Heart right ventricle (tissue), 16 donors: ENCODE measurements at regions of chr5 and their contacts with region 1.

Region 1: DNA sequence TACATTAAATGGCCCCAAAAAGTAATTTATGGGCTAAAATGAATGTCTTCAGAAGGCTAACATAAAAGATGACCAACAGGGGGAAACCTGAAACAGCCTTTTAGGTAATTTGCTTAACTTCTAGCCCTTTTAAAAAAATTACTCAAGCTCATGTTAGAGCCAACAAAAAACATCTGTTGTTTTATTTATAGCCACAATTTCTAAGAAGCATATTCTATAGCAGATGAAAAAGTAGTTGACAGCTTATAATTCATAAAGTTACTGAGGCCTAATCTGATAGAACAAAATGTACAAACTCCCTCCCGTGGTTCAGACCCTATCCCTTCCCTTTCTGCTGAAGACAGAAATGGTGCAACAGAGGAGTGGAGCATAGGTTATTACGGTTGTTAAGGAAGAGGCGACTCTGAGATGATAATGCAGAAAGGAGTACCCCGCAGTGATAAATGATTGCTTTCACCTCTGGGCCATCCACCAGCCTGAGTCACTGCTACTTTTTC is 46.1 kb downstream of the PIK3R1 start:
- DNase-seq: no peak
- ATAC-seq: peak in 1 of 8 donors; percentile 23
- H3K4me3 ChIP-seq: no peak overlapping the region
- H3K27ac ChIP-seq: peak overlapping the region; percentile 18 to 86 (median 70)
- H3K4me1 ChIP-seq: peaks cover 32 to 96% (median 94%) of the 10 kb centered on the region in 9 donors
- H3K27me3 ChIP-seq: no peaks in the 10 kb centered on the region
- CTCF ChIP-seq: peak in 4 of 9 donors; percentile 23 to 43 (median 36)

Region 2: GRCh38 chr5:67493676-67494075 is 767.9 kb before region 1 on chr5:
- intact Hi-C with region 1: loop called in 5 of 10 experiments (anchors 10 kb)
- DNase-seq: peak; percentile 13 to 44
- ATAC-seq: peak; percentile 55 to 95 (median 91)
- H3K4me3 ChIP-seq: no peak overlapping the region
- H3K27ac ChIP-seq: no peak overlapping the region
- H3K4me1 ChIP-seq: peaks cover 0 to 13% (median 0%) of the 10 kb centered on the region in 9 donors
- H3K27me3 ChIP-seq: no peaks in the 10 kb centered on the region
- CTCF ChIP-seq: peak in 7 of 9 donors; percentile 35 to 65 (median 58)

Region 3: DNA sequence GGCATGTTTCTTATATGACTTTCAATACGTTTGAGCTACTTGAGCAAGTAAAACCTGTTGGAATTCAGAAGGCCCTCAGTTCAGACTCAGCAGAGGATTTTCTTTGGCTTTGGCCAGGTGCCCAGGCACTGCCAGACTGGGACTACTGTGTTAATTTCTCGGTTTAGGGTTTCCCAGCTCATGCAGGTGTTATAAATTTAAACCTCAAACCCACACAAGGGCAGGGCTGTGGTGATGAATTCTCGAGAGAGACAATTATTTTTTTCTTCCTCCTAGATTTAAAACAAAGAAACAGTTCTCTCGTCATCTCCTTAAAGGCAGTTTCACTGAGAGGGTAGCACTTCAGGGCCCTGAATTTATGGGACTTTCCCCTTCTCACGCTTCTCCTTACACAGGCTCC is 452.0 kb before region 1 on chr5:
- intact Hi-C with region 1: loop called in 3 of 10 experiments (anchors 5 to 10 kb)
- DNase-seq: no peak
- ATAC-seq: no peak
- H3K4me3 ChIP-seq: no peak overlapping the region
- H3K27ac ChIP-seq: peak overlapping the region in 8 of 10 donors; percentile 13 to 88 (median 80)
- H3K4me1 ChIP-seq: peaks cover 2 to 41% (median 18%) of the 10 kb centered on the region in 9 donors
- H3K27me3 ChIP-seq: no peaks in the 10 kb centered on the region
- CTCF ChIP-seq: no peak